B cell (primary cell): ENCODE measurements at regions of chr17 and their contacts with region 1.

Region 1: DNA sequence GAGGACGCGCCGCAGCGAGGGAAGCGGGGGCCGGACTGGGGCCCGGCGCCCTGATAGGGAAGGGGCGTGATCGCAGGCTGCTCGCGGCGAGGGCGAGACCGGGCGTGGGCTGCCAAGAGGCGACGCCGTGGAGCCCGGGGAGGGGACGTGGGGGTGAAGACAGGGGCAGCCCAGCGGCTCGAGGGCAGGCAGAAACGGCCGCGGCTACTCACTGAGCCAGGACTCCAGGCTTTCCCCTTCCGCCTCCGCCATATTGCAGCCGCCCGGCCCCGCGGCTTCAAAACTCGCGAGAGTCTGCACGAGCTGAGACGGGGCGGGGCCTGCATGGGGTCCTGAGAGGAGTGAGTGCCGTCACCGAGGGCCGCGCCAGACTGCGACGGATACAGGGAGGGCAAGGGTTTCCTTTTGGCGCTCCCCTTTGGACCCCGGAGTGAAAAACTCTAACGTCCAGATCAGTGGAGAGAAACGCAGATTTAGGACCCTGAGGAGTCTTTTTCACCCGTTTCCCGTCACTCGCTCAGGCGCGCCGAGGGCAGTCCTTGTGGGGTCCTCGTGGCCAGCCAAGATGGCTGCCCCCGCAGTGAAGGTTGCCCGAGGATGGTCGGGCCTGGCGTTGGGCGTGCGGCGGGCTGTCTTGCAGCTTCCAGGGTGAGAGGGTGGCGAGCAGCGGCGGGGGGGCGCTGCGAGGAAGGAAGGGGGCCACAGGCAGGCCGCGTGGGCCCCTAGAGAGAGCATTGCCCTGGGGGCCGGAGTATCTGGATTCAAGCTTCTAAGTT is at the starts of genes GGA3 and MRPS7:
- DNase-seq: peak; percentile 98
- ATAC-seq: peak; percentile 96
- H3K4me3 ChIP-seq: peak within 1 kb of the TSS; percentile 79 to 96 (median 95)
- H3K4me3 Mint-ChIP-seq: peak within 1 kb of the TSS; percentile 97
- H3K27ac ChIP-seq: peak within 1 kb of the TSS; percentile 95 to 99
- H3K27ac Mint-ChIP-seq: peak within 1 kb of the TSS; percentile 100
- H3K4me1 ChIP-seq: peaks cover 25% of the 10 kb centered on the region in 2 donors
- H3K4me1 Mint-ChIP-seq: peaks cover 52% of the 10 kb centered on the region
- H3K27me3 ChIP-seq: no peaks in the 10 kb centered on the region
- H3K27me3 Mint-ChIP-seq: no peaks in the 10 kb centered on the region
- CTCF ChIP-seq: no peak
- total RNA-seq, gene GGA3: 134 and 135 TPM in 2 replicates
- total RNA-seq, gene MRPS7: 37.2 and 42.6 TPM in 2 replicates

Region 2: GRCh38 chr17:75133001-75133400 is 128.5 kb before region 1 on chr17:
- CTCF ChIA-PET with region 1: no interaction called
- POLR2A ChIA-PET with region 1: no interaction called
- intact Hi-C with region 1: no loop called
- DNase-seq: no peak
- ATAC-seq: no peak
- H3K4me3 ChIP-seq: no peak overlapping the region
- H3K4me3 Mint-ChIP-seq: no peak overlapping the region
- H3K27ac ChIP-seq: no peak overlapping the region
- H3K27ac Mint-ChIP-seq: peak overlapping the region; percentile 32
- H3K4me1 ChIP-seq: peaks cover 11 to 23% of the 10 kb centered on the region in 2 donors
- H3K4me1 Mint-ChIP-seq: peaks cover 30% of the 10 kb centered on the region
- H3K27me3 ChIP-seq: no peaks in the 10 kb centered on the region
- H3K27me3 Mint-ChIP-seq: no peaks in the 10 kb centered on the region
- CTCF ChIP-seq: no peak

Region 3: DNA sequence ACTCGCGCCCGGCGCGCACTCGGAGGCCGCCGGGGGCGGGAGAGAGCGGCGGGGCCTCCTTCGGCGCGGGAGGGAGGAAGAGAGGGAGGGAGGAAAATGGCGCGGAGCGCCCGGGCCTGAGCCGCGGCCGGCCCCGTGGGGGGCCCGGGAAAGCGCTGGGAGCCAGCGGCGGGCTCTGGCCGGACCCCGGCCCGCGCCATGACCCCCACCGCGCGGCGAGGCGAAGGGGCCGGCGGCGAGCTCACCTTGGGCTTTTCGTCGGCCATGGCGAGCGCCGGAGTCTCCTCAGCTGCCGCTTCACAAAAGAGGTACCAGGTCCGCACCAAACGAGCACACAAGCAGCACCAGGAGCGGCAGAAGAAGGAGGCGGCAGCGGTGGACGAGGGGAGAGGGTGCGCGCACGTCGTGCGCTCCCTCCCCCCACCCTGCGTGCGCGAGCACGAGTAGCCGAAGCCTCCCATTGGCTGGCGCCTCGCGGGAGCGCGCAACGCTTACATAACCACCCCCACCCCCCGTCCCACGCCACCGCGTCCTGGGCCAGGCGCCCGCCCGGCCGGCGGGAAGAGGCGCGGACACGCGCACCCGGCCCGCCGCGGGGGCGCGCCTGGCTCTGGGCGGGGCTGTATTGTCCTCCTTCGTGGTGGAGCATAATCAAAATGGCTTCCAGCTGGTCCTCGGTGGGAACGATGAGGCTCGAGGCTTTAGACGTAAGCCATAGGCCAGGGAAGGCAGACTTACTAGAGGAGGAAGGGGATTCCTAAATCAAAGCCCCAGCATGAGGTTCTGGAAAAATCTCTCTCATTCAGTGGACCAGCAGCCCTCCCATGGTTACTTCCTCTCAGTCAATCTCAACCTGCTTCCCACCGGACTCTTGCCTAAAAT is 78.7 kb before region 1 on chr17 and contains the start of gene SUMO2:
- CTCF ChIA-PET with region 1: no interaction called
- POLR2A ChIA-PET with region 1: no interaction called
- intact Hi-C with region 1: loop called (anchors 1 kb)
- DNase-seq: peak; percentile 99
- ATAC-seq: peak; percentile 82
- H3K4me3 ChIP-seq: peak within 1 kb of the TSS; percentile 80 to 93 (median 87)
- H3K4me3 Mint-ChIP-seq: peak within 1 kb of the TSS; percentile 90
- H3K27ac ChIP-seq: peak within 1 kb of the TSS; percentile 94 to 96
- H3K27ac Mint-ChIP-seq: peak within 1 kb of the TSS; percentile 99
- H3K4me1 ChIP-seq: peaks cover 15 to 21% of the 10 kb centered on the region in 2 donors
- H3K4me1 Mint-ChIP-seq: peaks cover 26% of the 10 kb centered on the region
- H3K27me3 ChIP-seq: no peaks in the 10 kb centered on the region
- H3K27me3 Mint-ChIP-seq: no peaks in the 10 kb centered on the region
- CTCF ChIP-seq: no peak
- total RNA-seq, gene SUMO2: 229 and 234 TPM in 2 replicates

Region 4: DNA sequence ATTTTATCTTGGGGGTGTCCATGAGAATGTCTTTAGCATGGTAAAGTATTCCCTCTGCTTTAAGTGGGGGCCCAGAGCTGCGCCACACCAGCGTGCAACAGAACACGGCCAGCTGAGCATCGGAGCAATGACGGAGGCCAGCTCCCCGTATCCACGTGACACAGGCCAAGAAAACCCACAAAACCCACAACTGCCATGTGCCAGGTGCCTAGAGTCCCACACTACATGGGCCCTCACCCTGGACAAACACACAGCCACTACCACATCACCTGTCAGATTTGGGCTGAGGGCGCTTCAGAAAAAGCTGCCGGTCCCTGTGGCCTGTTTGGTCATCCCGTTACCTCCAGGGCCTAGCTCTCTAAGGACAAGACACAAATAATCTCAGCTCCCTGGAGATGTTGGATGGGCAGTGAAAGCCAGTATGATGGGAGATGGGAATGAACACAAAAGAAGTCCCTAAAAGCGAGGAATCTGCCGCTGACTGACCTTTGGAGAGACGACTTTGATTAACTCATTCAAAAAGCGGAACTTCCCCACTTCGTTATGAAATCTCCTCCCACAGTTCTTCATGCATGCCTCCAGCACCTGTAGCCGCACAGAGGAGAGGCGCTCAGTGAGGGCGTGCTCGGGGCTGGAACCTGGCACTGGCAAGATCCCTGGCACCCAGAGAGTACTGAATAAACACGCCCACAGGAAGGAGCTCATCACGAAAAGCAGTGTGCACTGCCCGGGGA is 17.2 kb before region 1 on chr17:
- CTCF ChIA-PET with region 1: interaction called, 23 read pairs
- POLR2A ChIA-PET with region 1: interaction called, 19 read pairs
- intact Hi-C with region 1: loop called (anchors 1 kb)
- DNase-seq: peak; percentile 76
- ATAC-seq: peak; percentile 73
- H3K4me3 ChIP-seq: peak overlapping the region in 1 of 5 experiments; percentile 6
- H3K4me3 Mint-ChIP-seq: peak overlapping the region; percentile 81
- H3K27ac ChIP-seq: peak overlapping the region; percentile 36 to 80
- H3K27ac Mint-ChIP-seq: peak overlapping the region; percentile 94
- H3K4me1 ChIP-seq: peaks cover 16 to 66% of the 10 kb centered on the region in 2 donors
- H3K4me1 Mint-ChIP-seq: peaks cover 41% of the 10 kb centered on the region
- H3K27me3 ChIP-seq: no peaks in the 10 kb centered on the region
- H3K27me3 Mint-ChIP-seq: no peaks in the 10 kb centered on the region
- CTCF ChIP-seq: no peak

Region 5: DNA sequence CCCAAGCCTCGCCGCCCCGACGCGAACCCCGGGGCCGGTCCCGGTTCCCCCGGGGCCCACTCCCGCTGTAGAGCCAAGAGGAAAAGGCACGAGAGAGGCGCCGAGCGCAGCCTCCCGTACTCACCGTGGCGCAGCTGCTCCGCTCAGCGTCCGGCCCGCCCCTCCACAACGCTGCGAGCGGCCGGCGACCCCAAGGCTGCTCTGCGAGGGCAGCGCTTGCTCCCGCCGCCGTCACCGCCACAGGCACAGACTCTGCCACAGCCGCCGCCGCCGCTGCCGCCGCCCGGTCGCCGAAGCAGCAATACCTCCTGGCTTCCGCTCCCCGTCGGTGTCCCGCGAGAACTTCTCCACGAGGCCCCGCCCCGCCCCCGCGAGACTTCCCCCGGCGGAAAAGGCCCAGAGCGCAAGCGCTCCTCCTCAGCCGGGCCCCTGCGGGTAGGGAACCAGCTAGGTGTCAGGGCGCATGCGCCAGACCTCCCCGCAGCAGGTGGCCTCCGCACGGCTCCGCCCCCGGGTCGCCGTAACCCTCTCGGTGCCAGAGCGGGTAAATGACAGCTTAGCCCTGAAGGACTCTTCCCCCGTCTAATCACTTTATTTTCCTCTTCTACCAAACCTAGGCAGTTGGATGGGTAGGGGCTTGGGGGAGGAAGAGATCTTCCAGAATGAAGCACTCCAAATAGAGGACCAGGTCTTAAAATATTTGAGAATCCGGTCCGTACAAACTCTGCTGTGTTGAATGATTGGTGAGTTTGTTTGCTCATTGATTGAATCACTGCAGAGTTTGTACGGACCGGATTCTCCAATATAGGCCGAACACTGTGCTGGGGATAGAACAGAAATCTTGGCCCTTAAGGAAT is 144.1 kb after region 1 on chr17 and contains the start of gene GRB2:
- CTCF ChIA-PET with region 1: interaction called, 4 read pairs
- POLR2A ChIA-PET with region 1: interaction called, 8 read pairs
- intact Hi-C with region 1: loop called (anchors 1 kb)
- DNase-seq: peak; percentile 98
- ATAC-seq: peak; percentile 89
- H3K4me3 ChIP-seq: peak within 1 kb of the TSS; percentile 91 to 99 (median 99)
- H3K4me3 Mint-ChIP-seq: peak within 1 kb of the TSS; percentile 98
- H3K27ac ChIP-seq: peak within 1 kb of the TSS; percentile 79 to 92
- H3K27ac Mint-ChIP-seq: peak within 1 kb of the TSS; percentile 97
- H3K4me1 ChIP-seq: peaks cover 32 to 43% of the 10 kb centered on the region in 2 donors
- H3K4me1 Mint-ChIP-seq: peaks cover 39% of the 10 kb centered on the region
- H3K27me3 ChIP-seq: no peaks in the 10 kb centered on the region
- H3K27me3 Mint-ChIP-seq: no peaks in the 10 kb centered on the region
- CTCF ChIP-seq: no peak
- total RNA-seq, gene GRB2: 219 and 224 TPM in 2 replicates

Region 6: DNA sequence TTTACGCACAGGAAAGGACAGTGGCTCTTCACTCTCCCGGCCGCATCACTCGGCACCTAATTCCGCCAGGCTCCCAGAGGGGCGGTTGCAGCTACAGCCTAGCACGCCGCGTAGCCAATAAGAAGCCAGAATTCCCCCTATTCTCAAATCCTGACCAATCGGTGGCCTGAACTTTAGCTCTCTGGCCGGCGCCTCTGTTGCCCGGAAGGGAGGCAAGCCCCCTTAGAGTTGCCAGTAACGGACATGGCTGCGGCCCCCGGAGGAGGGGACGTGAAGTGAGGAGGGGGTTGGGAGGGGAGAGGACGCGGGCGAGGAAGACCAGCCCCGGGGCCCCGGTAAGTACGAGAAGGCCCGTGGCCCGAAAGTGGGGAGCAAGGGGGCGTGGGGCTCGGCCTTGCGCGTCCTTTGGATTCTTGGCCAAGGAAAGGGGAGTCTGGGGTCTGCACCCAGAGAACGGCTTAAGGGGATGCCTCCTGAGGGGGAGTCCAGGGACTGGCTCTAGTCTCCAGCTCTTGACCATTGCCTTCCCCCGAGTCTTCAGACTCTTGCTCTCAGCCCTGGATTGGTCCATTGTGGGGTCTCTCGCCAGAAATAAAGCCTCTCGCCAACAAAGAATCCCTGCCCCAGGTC is 195.0 kb after region 1 on chr17 and contains the start of gene TMEM94:
- CTCF ChIA-PET with region 1: no interaction called
- POLR2A ChIA-PET with region 1: interaction called, 4 read pairs
- intact Hi-C with region 1: loop called (anchors 1 kb)
- DNase-seq: peak; percentile 97
- ATAC-seq: peak; percentile 98
- H3K4me3 ChIP-seq: peak within 1 kb of the TSS; percentile 75 to 99 (median 84)
- H3K4me3 Mint-ChIP-seq: peak within 1 kb of the TSS; percentile 96
- H3K27ac ChIP-seq: peak within 1 kb of the TSS; percentile 60 to 79
- H3K27ac Mint-ChIP-seq: peak within 1 kb of the TSS; percentile 88
- H3K4me1 ChIP-seq: peaks cover 14 to 20% of the 10 kb centered on the region in 2 donors
- H3K4me1 Mint-ChIP-seq: peaks cover 42% of the 10 kb centered on the region
- H3K27me3 ChIP-seq: no peaks in the 10 kb centered on the region
- H3K27me3 Mint-ChIP-seq: no peaks in the 10 kb centered on the region
- CTCF ChIP-seq: no peak
- total RNA-seq, gene TMEM94: 112 and 139 TPM in 2 replicates

Region 7: DNA sequence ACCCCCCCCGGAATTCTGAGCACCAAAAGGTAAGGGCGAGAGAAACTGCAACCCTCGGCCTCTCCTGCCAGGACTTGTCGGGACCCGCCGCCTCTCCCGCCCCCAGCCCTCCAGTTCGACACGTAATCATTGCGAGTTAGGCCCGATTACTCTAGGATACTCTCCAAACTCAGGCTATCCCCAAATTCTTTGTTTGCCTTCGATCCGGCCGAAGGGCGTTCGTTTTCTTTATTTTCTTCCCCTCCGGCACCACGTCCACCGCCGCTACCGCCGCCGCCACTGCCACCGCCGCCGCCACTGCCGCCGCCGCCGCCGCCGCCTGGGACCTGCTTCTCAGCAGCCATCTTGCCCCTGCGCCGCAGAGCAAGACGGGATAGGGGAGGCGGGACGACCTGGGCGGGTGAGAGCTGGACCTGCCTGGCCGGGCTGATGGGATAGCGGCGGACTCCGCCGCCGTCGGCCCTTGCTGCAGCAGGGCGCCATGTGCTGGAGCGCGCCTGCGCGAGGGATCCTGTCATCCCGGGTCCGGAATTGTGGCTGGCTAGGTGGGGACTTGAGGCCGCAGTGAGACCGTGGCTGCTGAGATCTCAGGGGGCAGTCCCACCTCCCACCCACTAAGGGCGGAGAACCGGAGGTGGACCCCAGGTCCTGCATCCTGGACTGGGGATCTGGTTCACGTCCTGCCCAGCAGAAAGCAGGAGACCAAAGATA is 810.8 kb after region 1 on chr17 and contains the start of gene SRP68:
- CTCF ChIA-PET with region 1: no interaction called
- POLR2A ChIA-PET with region 1: no interaction called
- intact Hi-C with region 1: no loop called
- DNase-seq: peak; percentile 87
- ATAC-seq: peak; percentile 93
- H3K4me3 ChIP-seq: peak within 1 kb of the TSS; percentile 80 to 92 (median 89)
- H3K4me3 Mint-ChIP-seq: peak within 1 kb of the TSS; percentile 96
- H3K27ac ChIP-seq: peak within 1 kb of the TSS; percentile 74 to 87
- H3K27ac Mint-ChIP-seq: peak within 1 kb of the TSS; percentile 94
- H3K4me1 ChIP-seq: peaks cover 46 to 53% of the 10 kb centered on the region in 2 donors
- H3K4me1 Mint-ChIP-seq: peaks cover 59% of the 10 kb centered on the region
- H3K27me3 ChIP-seq: peaks cover 0 to 39% (median 26%) of the 10 kb centered on the region in 4 experiments
- H3K27me3 Mint-ChIP-seq: peaks cover 21% of the 10 kb centered on the region
- CTCF ChIP-seq: no peak
- total RNA-seq, gene SRP68: 75.4 and 82.3 TPM in 2 replicates